ENCODE measurements at regions of chr10 and their contacts with region 1.

Region 1: DNA sequence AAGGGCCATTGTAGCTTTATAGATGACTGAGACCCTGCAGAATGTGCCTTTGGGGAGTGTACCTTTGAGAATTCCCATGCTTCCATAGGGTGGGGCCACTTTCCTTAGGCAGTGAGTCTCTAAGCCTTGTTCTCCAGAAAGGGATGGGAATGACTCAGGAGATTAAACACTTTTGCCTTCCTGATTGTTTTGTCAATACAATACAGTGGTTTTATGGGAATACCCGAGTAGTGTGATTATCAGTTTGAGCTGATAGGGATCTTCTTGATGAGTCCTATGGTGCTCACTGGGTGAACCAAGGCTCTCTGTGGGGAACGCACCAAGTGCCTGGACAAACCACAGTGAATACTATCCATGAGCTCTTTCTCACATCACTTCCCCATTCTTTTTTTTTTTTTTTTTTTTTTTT is 6.3 kb downstream of the MYOF start:
- DNase-seq: no peak
- H3K4me3 ChIP-seq: no peak overlapping the region
- H3K27ac ChIP-seq: peak overlapping the region; percentile 43 to 93 (median 90)
- H3K4me1 ChIP-seq: peaks cover 28 to 100% (median 97%) of the 10 kb centered on the region in 4 donors
- H3K27me3 ChIP-seq: no peaks in the 10 kb centered on the region
- CTCF ChIP-seq: no peak
- EP300 ChIP-seq: no peak
- POLR2A ChIP-seq: no peak

Region 2: GRCh38 chr10:93425861-93426260 is 50.0 kb before region 1 on chr10:
- intact Hi-C with region 1: loop called (anchors 5 kb)
- DNase-seq: no peak
- H3K4me3 ChIP-seq: no peak overlapping the region
- H3K27ac ChIP-seq: peak overlapping the region in 3 of 4 donors; percentile 70 to 100 (median 75)
- H3K4me1 ChIP-seq: peaks cover 21 to 68% (median 54%) of the 10 kb centered on the region in 4 donors
- H3K27me3 ChIP-seq: no peaks in the 10 kb centered on the region
- CTCF ChIP-seq: no peak
- EP300 ChIP-seq: no peak
- POLR2A ChIP-seq: no peak

Region 3: DNA sequence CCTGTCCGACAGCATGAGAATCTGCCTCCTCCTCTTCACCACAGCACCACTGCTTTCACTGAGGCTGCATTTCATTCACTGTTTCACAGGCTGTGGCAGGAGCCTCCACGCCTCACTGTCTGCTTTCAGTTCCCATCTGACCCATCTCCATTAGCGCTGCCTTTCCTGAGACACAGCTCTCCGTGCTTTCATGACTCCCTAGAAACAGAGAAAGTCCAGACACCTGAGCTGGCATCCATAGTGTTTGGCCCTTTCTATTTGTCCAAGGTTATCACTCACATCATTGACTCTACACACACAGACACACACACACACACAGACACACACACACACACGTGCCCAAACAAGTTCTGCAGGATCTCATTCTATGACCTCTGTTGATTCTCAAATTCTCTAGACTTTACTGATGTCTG is 287.1 kb after region 1 on chr10:
- intact Hi-C with region 1: no loop called
- DNase-seq: no peak
- H3K4me3 ChIP-seq: no peak overlapping the region
- H3K27ac ChIP-seq: no peak overlapping the region
- H3K4me1 ChIP-seq: peaks cover 0 to 6% (median 5%) of the 10 kb centered on the region in 4 donors
- H3K27me3 ChIP-seq: peaks cover 0 to 21% (median 2%) of the 10 kb centered on the region in 4 donors
- CTCF ChIP-seq: no peak
- EP300 ChIP-seq: no peak
- POLR2A ChIP-seq: no peak